ENCODE measurements at regions of chr3 and their contacts with region 1.

Region 1: GRCh38 chr3:22887664-22888291 is 315.3 kb upstream of the UBE2E2 start:
- DNase-seq: no peak
- H3K4me3 ChIP-seq: no peak overlapping the region
- H3K27ac ChIP-seq: no peak overlapping the region
- H3K4me1 ChIP-seq: no peaks in the 10 kb centered on the region
- H3K27me3 ChIP-seq: no peaks in the 10 kb centered on the region
- CTCF ChIP-seq: peak in 2 of 3 experiments; percentile 64 to 65; a peak in 3 of 4 replicates
- EP300 ChIP-seq: no peak
- POLR2A ChIP-seq: no peak
- RAD21 ChIP-seq: peak; percentile 72 to 81

Region 2: DNA sequence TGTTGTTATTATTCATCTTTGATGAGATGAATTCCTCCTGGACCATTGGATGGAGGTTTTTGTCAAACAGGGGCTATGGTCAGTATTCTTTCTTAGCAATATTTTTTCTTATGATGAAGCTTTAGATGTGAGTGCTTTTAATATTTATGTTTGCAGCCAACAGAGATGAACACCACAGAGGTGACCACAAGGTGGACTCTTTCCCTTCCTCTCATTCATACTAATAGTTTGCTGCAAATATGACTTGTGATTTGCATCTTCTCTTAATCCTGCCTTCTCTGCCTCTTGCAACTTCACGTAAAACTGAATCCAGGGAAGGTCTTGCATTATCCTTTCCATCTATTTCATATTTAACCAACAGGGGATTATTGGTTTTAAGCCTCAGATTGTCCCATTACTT is 157.8 kb before region 1 on chr3:
- CTCF ChIA-PET with region 1: interaction called, 19 read pairs
- POLR2A ChIA-PET with region 1: no interaction called
- DNase-seq: no peak
- H3K4me3 ChIP-seq: no peak overlapping the region
- H3K27ac ChIP-seq: no peak overlapping the region
- H3K4me1 ChIP-seq: no peaks in the 10 kb centered on the region
- H3K27me3 ChIP-seq: no peaks in the 10 kb centered on the region
- CTCF ChIP-seq: peak in 2 of 3 experiments; percentile 37 to 40; a peak in 3 of 4 replicates
- EP300 ChIP-seq: no peak
- POLR2A ChIP-seq: no peak
- RAD21 ChIP-seq: peak; percentile 66 to 71

Region 3: DNA sequence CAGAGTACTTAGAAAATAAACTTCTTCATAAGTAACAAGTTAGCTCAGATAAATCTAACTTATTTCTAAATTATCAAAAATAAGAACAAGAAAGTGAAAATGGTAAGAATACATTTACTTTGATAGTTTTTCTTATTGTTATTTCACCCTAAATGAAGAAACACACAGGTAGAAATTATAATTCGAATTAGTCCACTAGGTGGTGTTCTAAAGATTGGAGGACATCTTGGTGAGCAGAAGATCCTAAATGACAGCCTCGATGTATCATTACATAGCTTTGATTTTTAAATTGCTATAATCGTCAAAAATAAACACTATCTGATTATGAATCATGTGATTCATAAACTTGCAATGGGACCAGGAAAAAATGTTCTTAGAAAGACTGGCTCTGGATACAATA is 34.5 kb after region 1 on chr3:
- CTCF ChIA-PET with region 1: interaction called, 12 read pairs
- POLR2A ChIA-PET with region 1: no interaction called
- DNase-seq: no peak
- H3K4me3 ChIP-seq: no peak overlapping the region
- H3K27ac ChIP-seq: no peak overlapping the region
- H3K4me1 ChIP-seq: no peaks in the 10 kb centered on the region
- H3K27me3 ChIP-seq: no peaks in the 10 kb centered on the region
- CTCF ChIP-seq: peak in 1 of 3 experiments; percentile 10; a peak in 2 of 4 replicates
- EP300 ChIP-seq: no peak
- POLR2A ChIP-seq: no peak
- RAD21 ChIP-seq: peak; percentile 16 to 19; a peak in 2 of 4 replicates

Measured in H1 (cell line).